H1 (cell line): ENCODE measurements at regions of chr11 and their contacts with region 1.

Region 1: DNA sequence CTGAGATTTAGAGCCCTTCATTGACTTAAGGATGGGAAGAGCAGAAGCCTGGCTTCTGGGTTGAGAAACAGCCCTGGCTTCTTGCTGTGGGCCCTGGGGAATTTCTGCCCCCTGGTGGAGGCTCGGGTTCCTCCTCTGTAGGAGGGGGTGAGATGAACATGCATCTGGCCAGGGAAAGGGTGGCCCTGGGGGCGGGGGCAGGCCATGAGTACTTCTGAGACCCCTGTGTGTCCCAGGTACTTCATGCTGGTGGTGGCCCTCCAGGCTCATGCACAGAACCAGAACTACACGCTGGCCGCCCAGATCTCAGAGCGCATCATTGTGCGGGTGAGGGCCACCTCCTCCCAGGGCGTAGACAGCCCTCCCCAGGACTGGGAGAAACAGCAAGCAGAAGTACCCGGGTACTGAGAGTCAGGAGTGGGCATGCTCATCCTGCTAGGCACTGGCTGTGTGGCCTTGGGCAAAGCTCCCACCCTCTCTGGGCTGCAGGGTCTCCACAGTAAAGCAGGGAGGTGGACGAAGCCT is 15.8 kb downstream of the TMEM258 start:
- DNase-seq: peak; percentile 54 to 89
- H3K4me3 ChIP-seq: no peak overlapping the region
- H3K27ac ChIP-seq: no peak overlapping the region
- H3K4me1 ChIP-seq: peaks cover 0 to 16% (median 10%) of the 10 kb centered on the region in 4 experiments; a peak in 6 of 7 replicates
- H3K27me3 ChIP-seq: no peaks in the 10 kb centered on the region; a peak in 1 of 7 replicates
- CTCF ChIP-seq: peak; percentile 76 to 89 (median 80)
- EP300 ChIP-seq: no peak
- POLR2A ChIP-seq: no peak
- RAD21 ChIP-seq: peak; percentile 60 to 77

Region 2: DNA sequence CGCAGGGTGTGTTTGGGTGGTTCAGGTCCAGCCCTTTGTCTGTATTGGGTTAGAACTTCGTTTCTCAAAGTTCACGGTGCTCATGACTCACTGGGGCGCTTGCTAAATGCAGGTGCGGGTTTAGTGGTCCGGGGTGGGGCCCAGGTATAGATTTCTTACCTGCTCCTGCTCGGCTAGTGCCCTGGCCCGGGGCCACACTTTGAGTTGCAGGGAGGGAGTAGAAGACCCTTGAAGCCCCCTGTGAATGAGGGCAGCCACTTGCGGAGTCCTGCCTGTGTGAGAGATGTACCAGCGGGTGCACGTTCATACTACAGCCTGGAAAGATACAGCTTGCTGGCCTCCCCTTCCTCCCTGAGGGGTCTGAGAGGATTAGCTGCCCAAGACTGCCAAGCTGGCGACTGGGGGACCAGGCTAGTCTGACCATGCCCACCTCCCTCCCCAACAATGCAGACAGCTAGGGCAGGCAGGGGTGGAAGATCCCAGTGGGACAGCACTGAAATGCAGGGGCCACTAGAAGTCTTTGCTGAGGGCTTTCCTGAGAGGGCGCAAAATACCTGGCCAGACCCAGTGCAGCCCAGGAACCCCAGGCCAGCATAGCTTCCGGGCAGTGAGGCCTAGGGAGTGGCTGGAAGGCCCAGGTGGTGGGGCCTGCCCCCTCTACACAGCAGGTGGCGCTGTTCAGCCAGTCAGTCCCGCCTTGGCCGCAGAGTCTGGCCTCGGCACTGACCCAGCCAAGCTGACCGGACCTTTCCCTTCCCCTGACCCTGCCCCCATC is 29.2 kb before region 1 on chr11:
- CTCF ChIA-PET with region 1: interaction called, 52 read pairs
- POLR2A ChIA-PET with region 1: interaction called, 5 read pairs
- DNase-seq: peak; percentile 41 to 94
- H3K4me3 ChIP-seq: no peak overlapping the region
- H3K27ac ChIP-seq: no peak overlapping the region
- H3K4me1 ChIP-seq: peaks cover 6 to 26% (median 10%) of the 10 kb centered on the region in 4 experiments
- H3K27me3 ChIP-seq: peaks cover 0 to 6% (median 5%) of the 10 kb centered on the region in 4 experiments; a peak in 5 of 7 replicates
- CTCF ChIP-seq: peak in 2 of 3 experiments; percentile 87 to 95; a peak in 3 of 4 replicates
- EP300 ChIP-seq: no peak
- POLR2A ChIP-seq: no peak
- RAD21 ChIP-seq: peak; percentile 71 to 78